ENCODE measurements at regions of chr6 and their contacts with region 1.

Region 1: DNA sequence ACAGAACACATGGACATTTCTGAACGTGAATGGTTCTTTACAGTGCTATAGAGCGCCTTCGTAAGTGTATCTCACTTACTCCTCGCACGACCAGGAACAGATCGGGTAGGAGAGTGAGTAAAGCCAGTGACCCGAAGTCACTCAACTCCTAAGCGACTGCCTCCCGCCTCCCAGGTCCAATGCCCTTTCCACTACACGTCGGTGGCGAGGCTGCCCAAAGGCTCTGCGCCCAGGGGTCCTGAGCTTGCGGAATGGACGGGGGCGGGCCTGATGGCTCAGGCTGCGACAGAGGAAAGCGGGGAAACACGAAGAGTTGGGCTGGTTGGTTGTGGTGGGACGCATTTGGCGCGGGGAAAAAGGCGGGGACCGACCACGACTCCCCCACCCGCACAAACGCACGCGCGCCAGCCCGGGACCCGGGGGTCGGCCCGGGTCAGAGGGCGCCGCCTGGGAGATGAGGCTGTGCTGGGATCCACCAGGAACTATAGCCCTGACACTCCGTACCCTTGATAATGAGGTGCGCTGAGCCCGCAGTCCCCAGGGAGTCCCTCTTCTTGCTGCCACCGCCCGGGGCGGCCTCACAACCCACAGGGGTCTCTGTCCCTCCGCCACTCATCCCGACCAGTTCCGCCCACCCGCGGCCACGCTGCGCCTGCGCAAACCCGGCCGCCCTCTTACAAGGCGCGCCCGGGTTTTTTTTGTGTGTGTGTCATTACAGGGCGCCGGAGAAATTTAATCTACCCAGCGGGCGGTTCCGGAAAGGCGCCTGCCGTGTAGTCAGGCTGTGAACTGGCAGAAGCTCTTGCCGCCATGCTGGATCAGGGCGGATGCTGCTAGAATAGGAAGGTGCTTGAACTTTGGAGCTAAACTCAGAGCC is at the start of gene BLOC1S5:
- DNase-seq: peak; percentile 94 to 98
- ATAC-seq: peak; percentile 98 to 99 (median 99)
- H3K4me3 ChIP-seq: peak within 1 kb of the TSS; percentile 64 to 95 (median 85)
- H3K27ac ChIP-seq: peak within 1 kb of the TSS; percentile 52 to 94 (median 90)
- H3K4me1 ChIP-seq: peaks cover 0 to 25% (median 10%) of the 10 kb centered on the region in 9 donors
- H3K27me3 ChIP-seq: no peaks in the 10 kb centered on the region
- CTCF ChIP-seq: peak in 3 of 9 donors; percentile 14 to 28 (median 26)
- total RNA-seq, gene BLOC1S5: 6.8 to 14.1 (median 9.7) TPM

Region 2: DNA sequence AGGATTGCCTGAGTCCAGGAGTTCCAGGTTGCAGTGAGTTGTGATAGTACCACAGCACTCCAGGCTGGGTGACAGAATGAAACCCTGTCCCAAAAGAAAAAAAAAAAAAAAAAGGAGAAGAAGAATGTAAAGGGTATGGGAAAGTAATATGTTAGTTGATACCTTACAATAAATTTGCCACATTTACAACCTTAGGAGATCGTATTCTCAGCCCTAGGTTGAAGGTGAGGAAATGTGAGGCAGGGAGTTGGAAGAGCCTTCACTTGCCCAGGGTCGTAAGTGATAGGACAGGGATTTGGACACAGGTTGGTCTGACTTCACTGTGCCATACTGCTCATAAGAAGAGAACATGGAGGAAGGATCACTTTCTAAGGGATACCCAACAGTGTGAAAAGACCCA is 269.5 kb before region 1 on chr6:
- intact Hi-C with region 1: no loop called
- DNase-seq: no peak
- ATAC-seq: no peak
- H3K4me3 ChIP-seq: no peak overlapping the region
- H3K27ac ChIP-seq: no peak overlapping the region
- H3K4me1 ChIP-seq: no peaks in the 10 kb centered on the region
- H3K27me3 ChIP-seq: peaks cover 0 to 12% (median 0%) of the 10 kb centered on the region in 7 donors
- CTCF ChIP-seq: no peak

Region 3: GRCh38 chr6:7900621-7901020 is 163.4 kb before region 1 on chr6:
- intact Hi-C with region 1: loop called in 1 of 10 experiments (anchors 5 kb)
- DNase-seq: no peak
- ATAC-seq: no peak
- H3K4me3 ChIP-seq: no peak overlapping the region
- H3K27ac ChIP-seq: no peak overlapping the region
- H3K4me1 ChIP-seq: peaks cover 0 to 21% (median 12%) of the 10 kb centered on the region in 9 donors
- H3K27me3 ChIP-seq: no peaks in the 10 kb centered on the region
- CTCF ChIP-seq: no peak

Region 4: GRCh38 chr6:7992002-7992815 is 71.8 kb before region 1 on chr6:
- intact Hi-C with region 1: loop called in 1 of 10 experiments (anchors 5 kb)
- DNase-seq: peak in 1 of 2 donors; percentile 18
- ATAC-seq: peak; percentile 60 to 90 (median 74)
- H3K4me3 ChIP-seq: peak overlapping the region in 1 of 10 donors; percentile 13
- H3K27ac ChIP-seq: peak overlapping the region in 5 of 10 donors; percentile 20 to 77 (median 31)
- H3K4me1 ChIP-seq: peaks cover 0 to 24% (median 9%) of the 10 kb centered on the region in 9 donors
- H3K27me3 ChIP-seq: no peaks in the 10 kb centered on the region
- CTCF ChIP-seq: peak; percentile 11 to 65 (median 47)

Region 5: DNA sequence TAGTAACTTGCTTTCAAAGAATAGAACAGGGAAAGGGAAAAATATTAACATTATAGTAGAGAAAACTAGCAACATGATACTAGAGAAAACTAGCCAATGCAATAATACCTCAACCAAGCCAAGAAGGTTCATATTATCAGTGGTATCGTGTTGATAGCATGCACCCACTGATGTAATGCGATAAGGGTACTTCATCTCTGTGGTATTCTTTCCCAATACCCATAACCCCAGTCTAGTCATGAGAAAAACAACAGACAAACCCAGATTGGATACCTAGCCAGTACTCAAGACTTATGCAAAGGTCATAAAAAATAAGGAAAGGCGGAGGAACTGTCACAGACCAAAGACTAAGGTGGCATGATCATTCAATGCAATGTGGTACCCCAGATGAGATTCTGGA is 20.8 kb before region 1 on chr6:
- intact Hi-C with region 1: loop called in 1 of 10 experiments (anchors 1 kb)
- DNase-seq: no peak
- ATAC-seq: no peak
- H3K4me3 ChIP-seq: no peak overlapping the region
- H3K27ac ChIP-seq: no peak overlapping the region
- H3K4me1 ChIP-seq: peaks cover 0 to 11% (median 0%) of the 10 kb centered on the region in 9 donors
- H3K27me3 ChIP-seq: no peaks in the 10 kb centered on the region
- CTCF ChIP-seq: no peak

Region 6: DNA sequence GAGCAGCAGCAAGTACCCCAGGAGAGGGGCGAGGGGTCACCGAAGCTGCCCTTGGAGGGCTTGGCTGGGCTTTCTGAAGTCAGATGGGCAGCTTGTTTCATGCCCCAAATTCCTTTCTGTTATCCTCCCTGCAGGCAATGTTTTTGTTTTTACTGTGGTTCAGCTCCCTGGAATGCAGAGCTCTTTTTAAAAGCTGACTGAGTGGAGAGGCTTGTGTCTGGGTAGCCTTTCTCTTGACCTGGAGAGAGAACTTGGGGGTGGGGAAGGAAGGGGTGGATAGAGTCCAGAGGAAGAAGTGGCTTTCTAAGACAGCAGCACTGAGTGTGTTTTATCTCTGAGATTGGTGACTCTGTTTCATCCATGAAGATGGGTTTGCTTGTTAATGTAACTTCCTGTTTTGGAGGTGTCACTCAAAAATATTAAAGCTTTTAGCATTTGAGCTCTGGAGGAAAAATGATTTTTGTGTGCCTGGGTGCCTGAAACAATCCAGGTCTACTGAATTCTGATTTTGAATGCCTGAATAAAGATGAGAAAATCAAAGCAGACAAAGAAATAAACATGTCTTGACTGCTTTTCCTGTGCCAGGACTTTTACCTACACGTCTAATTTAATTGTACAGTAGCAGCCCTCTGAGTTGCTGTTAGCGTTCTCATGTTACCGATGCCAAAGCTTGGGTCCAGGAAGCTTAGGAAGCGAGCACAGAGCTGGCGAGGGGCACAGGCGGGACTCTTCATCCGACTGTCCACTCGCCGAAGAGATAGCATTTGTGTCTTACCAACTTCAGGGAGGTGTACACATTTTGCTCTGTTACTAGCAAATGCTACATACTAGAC is 116.5 kb after region 1 on chr6:
- intact Hi-C with region 1: no loop called
- DNase-seq: no peak
- ATAC-seq: no peak
- H3K4me3 ChIP-seq: no peak overlapping the region
- H3K27ac ChIP-seq: no peak overlapping the region
- H3K4me1 ChIP-seq: peaks cover 0 to 17% (median 13%) of the 10 kb centered on the region in 9 donors
- H3K27me3 ChIP-seq: no peaks in the 10 kb centered on the region
- CTCF ChIP-seq: no peak